IMR-90 (cell line): ENCODE measurements at regions of chr21 and their contacts with region 1.

Region 1: DNA sequence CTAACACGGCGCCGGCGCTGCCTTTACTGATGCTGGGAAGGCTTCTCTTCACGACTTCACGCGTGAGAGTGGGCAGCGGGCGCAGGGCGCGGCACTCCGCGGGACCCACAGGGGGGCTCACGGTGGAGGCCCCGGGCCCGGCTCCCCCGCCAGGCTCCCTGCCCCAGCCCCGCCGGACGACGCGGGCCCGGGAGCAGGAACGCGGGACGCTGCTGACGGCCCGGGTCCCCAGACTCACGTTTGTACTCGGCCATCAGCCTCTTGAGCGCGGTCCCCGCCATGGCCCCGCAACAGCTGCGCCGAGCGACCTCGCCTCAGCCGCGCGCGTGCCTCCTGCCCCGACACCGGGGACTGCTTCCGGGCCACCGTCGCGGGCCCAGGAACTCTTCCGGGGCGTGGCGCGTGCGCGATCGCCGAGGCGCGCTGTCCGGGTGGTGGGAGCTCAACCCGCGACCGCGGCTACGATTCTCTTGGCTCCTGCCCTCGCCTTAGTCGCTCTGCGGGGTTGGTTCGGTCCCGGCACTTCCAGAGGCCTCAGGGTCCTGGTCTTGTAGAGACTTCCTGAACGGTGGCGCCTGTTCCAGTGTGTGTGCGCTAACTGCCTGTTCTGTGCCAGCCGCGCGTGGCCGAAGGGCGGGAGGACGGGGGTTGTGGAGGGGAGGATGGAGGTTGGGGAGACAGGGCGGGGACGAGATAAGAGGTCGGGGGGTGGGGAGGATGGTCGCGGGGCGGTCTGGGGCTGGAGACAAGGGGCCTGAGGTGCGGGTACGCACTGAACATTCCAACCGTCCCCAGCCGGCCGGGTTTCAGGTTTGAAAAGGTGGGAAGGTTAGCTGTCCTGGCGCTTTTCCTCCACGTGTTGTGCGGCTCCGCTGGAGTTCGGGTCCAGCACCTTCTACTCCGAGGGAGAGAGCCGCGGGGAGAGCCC is at the start of gene UBE2G2:
- DNase-seq: peak; percentile 65
- ATAC-seq: peak; percentile 91
- H3K4me3 ChIP-seq: peak within 1 kb of the TSS; percentile 100
- H3K27ac ChIP-seq: peak within 1 kb of the TSS; percentile 98
- H3K4me1 ChIP-seq: peaks cover 2% of the 10 kb centered on the region; the same call in 1 of the 2 replicates
- H3K27me3 ChIP-seq: no peaks in the 10 kb centered on the region
- CTCF ChIP-seq: no peak
- POLR2A ChIP-seq: peak; percentile 39; the same call in 1 of the 2 replicates
- RAD21 ChIP-seq: no peak
- total RNA-seq, gene UBE2G2: 65.4 and 75.8 TPM in 2 replicates

Region 2: DNA sequence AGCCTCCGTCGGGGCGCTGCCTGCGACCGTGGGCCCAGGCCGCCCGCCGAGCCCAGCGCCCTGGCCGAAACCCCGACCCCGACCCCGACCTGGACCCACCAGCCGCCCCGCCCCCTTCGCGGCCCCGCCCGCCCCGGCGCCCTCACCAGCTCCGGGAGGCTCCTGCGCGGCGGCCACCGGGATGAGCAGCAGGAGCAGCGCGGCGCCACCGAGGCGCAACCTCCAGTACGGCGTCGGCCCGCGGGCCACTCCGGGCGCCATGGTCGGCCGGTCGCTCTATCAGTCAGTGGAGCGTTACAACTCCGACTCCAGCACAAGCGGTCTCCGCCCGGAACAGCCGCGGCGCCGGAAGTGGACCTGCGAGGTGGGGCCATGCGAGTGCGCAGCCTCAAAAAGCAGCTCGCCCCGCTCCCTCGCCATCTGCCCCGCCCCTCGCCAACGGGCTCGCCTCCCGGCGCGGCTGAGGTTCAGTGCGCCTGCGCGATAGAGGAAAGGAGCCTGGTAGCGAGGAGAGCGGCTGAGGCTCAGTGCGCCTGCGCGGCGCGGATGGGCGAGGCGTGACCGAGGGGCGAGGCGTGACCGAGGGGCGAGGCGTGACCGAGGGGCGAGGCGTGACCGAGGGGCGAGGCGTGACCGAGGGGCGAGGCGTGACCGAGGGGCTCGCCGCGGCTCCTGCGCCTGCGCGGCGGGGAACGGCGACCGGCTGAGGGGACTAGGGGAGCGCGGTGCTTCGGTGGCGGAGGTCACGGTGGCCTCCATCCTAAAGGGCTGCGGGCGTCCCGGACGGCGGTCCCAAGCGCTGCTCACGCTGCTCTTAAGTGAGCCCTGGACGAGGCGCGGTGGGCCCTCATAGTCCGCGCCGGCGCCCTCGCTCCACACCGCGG is 71.9 kb after region 1 on chr21 and contains the start of gene PTTG1IP:
- CTCF ChIA-PET with region 1: interaction called, 4 read pairs
- POLR2A ChIA-PET with region 1: no interaction called
- dilution Hi-C with region 1: no loop called
- in situ Hi-C with region 1: no loop called
- intact Hi-C with region 1: loop called (anchors 5 kb)
- DNase-seq: peak; percentile 94
- ATAC-seq: peak; percentile 81
- H3K4me3 ChIP-seq: peak within 1 kb of the TSS; percentile 90
- H3K27ac ChIP-seq: peak within 1 kb of the TSS; percentile 85
- H3K4me1 ChIP-seq: peaks cover 17% of the 10 kb centered on the region
- H3K27me3 ChIP-seq: no peaks in the 10 kb centered on the region
- CTCF ChIP-seq: no peak
- POLR2A ChIP-seq: peak; percentile 83
- RAD21 ChIP-seq: no peak
- total RNA-seq, gene PTTG1IP: 194 and 230 TPM in 2 replicates